ENCODE measurements at regions of chr15 and their contacts with region 1.

Region 1: GRCh38 chr15:91271565-91272153 is 171.6 kb downstream of the SV2B start:
- DNase-seq: peak; percentile 66
- H3K4me3 ChIP-seq: no peak overlapping the region
- H3K27ac ChIP-seq: no peak overlapping the region
- H3K4me1 ChIP-seq: no peaks in the 10 kb centered on the region
- H3K27me3 ChIP-seq: no peaks in the 10 kb centered on the region
- CTCF ChIP-seq: peak; percentile 70 to 74
- POLR2A ChIP-seq: no peak

Region 2: GRCh38 chr15:90931737-90932659 is 339.7 kb before region 1 on chr15 and contains the start of gene HDDC3:
- CTCF ChIA-PET with region 1: interaction called, 13 read pairs
- POLR2A ChIA-PET with region 1: no interaction called
- dilution Hi-C with region 1: no loop called
- intact Hi-C with region 1: no loop called
- DNase-seq: peak; percentile 79
- H3K4me3 ChIP-seq: peak within 1 kb of the TSS; percentile 33 to 80 (median 62)
- H3K27ac ChIP-seq: no peak within 1 kb of the TSS
- H3K4me1 ChIP-seq: peaks cover 36% of the 10 kb centered on the region
- H3K27me3 ChIP-seq: no peaks in the 10 kb centered on the region
- CTCF ChIP-seq: peak; percentile 98
- POLR2A ChIP-seq: peak; percentile 74
- total RNA-seq, gene HDDC3: 12.3 and 16.0 TPM in 2 replicates

Region 3: DNA sequence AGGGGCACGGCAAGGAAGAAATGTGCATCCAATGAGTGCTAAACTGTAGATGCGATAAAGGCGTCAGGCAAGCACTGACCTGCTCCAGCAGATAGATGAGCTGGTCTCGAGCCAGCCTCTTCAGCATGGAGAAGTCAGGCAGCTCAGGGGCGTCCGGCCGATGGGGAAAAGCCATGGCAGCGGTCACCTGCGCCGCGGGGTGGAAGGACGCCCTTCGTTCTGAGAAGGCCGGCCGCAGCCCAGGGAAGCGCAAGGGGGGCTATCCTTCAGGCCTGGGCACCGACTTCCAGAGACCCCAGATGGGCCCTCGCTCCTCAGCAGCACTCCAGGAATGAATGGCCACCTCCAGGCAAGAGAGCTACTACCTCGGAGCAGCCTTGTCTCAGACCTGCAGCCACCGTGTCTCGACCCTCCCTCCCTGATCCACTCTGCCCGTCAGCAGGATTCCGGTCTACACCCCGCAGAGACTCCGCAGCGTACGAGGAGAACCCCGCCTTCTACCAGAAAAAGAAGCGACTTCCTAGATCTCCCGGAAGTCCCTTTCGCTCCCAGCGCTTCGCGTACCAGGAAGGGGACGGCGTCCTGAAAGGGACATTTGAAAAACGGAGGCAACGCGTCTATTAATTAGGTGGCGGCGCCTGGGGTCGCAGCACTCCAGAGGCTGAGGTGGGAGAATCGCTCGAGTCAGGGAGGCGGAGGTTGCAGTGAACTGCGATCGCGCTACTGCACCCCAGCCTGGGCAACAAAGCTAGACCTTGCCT is 249.4 kb before region 1 on chr15 and contains the start of gene VPS33B:
- CTCF ChIA-PET with region 1: interaction called, 10 read pairs
- POLR2A ChIA-PET with region 1: no interaction called
- dilution Hi-C with region 1: no loop called
- intact Hi-C with region 1: no loop called
- DNase-seq: peak; percentile 85
- H3K4me3 ChIP-seq: peak within 1 kb of the TSS; percentile 67 to 93 (median 70)
- H3K27ac ChIP-seq: peak within 1 kb of the TSS; percentile 14
- H3K4me1 ChIP-seq: peaks cover 14% of the 10 kb centered on the region
- H3K27me3 ChIP-seq: no peaks in the 10 kb centered on the region
- CTCF ChIP-seq: no peak
- POLR2A ChIP-seq: peak; percentile 52
- total RNA-seq, gene VPS33B: 14.2 and 14.7 TPM in 2 replicates

Region 4: GRCh38 chr15:91055548-91056331 is 215.9 kb before region 1 on chr15:
- CTCF ChIA-PET with region 1: interaction called, 210 read pairs
- POLR2A ChIA-PET with region 1: no interaction called
- dilution Hi-C with region 1: no loop called
- intact Hi-C with region 1: loop called (anchors 1 kb)
- DNase-seq: peak; percentile 47
- H3K4me3 ChIP-seq: no peak overlapping the region
- H3K27ac ChIP-seq: no peak overlapping the region
- H3K4me1 ChIP-seq: no peaks in the 10 kb centered on the region
- H3K27me3 ChIP-seq: peaks cover 17 to 31% of the 10 kb centered on the region in 2 experiments
- CTCF ChIP-seq: peak; percentile 59 to 73
- POLR2A ChIP-seq: no peak

Region 5: GRCh38 chr15:91150502-91151160 is 121.0 kb before region 1 on chr15:
- CTCF ChIA-PET with region 1: no interaction called
- POLR2A ChIA-PET with region 1: no interaction called
- dilution Hi-C with region 1: no loop called
- intact Hi-C with region 1: no loop called
- DNase-seq: no peak
- H3K4me3 ChIP-seq: no peak overlapping the region
- H3K27ac ChIP-seq: no peak overlapping the region
- H3K4me1 ChIP-seq: no peaks in the 10 kb centered on the region
- H3K27me3 ChIP-seq: no peaks in the 10 kb centered on the region
- CTCF ChIP-seq: no peak
- POLR2A ChIP-seq: no peak

Region 6: GRCh38 chr15:91219206-91219605 is 52.5 kb before region 1 on chr15:
- CTCF ChIA-PET with region 1: interaction called, 10 read pairs
- POLR2A ChIA-PET with region 1: no interaction called
- dilution Hi-C with region 1: no loop called
- intact Hi-C with region 1: loop called (anchors 2 kb)
- DNase-seq: no peak
- H3K4me3 ChIP-seq: no peak overlapping the region
- H3K27ac ChIP-seq: no peak overlapping the region
- H3K4me1 ChIP-seq: no peaks in the 10 kb centered on the region
- H3K27me3 ChIP-seq: no peaks in the 10 kb centered on the region
- CTCF ChIP-seq: no peak
- POLR2A ChIP-seq: no peak

Region 7: GRCh38 chr15:91258425-91258779 is 13.3 kb before region 1 on chr15:
- CTCF ChIA-PET with region 1: interaction called, 23 read pairs
- POLR2A ChIA-PET with region 1: no interaction called
- dilution Hi-C with region 1: no loop called
- intact Hi-C with region 1: no loop called
- DNase-seq: no peak
- H3K4me3 ChIP-seq: no peak overlapping the region
- H3K27ac ChIP-seq: no peak overlapping the region
- H3K4me1 ChIP-seq: no peaks in the 10 kb centered on the region
- H3K27me3 ChIP-seq: no peaks in the 10 kb centered on the region
- CTCF ChIP-seq: no peak
- POLR2A ChIP-seq: no peak

Region 8: DNA sequence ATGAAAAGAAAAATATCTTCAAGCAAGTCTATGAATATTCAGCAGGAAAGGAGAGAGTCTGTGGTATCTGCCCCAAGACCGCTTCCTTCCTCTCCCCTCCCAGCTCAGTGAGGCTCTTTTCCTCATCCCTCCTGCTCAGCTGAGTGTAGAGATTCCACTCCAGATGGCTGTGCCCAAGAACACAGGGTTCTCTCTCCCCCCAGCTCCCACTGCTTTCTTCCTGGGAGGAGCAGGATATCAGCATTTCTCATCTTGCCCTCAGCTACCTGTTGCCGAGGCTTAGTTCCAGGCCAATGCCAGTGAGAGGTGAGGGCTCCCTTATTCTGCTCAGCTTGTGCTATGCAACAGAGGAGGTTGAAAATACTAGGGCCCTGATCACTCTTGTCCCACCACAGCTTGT is 40.3 kb after region 1 on chr15:
- CTCF ChIA-PET with region 1: no interaction called
- POLR2A ChIA-PET with region 1: no interaction called
- dilution Hi-C with region 1: no loop called
- intact Hi-C with region 1: no loop called
- DNase-seq: no peak
- H3K4me3 ChIP-seq: no peak overlapping the region
- H3K27ac ChIP-seq: no peak overlapping the region
- H3K4me1 ChIP-seq: no peaks in the 10 kb centered on the region
- H3K27me3 ChIP-seq: no peaks in the 10 kb centered on the region
- CTCF ChIP-seq: no peak
- POLR2A ChIP-seq: no peak